ENCODE measurements at regions of chr3 and their contacts with region 1.

Region 1: DNA sequence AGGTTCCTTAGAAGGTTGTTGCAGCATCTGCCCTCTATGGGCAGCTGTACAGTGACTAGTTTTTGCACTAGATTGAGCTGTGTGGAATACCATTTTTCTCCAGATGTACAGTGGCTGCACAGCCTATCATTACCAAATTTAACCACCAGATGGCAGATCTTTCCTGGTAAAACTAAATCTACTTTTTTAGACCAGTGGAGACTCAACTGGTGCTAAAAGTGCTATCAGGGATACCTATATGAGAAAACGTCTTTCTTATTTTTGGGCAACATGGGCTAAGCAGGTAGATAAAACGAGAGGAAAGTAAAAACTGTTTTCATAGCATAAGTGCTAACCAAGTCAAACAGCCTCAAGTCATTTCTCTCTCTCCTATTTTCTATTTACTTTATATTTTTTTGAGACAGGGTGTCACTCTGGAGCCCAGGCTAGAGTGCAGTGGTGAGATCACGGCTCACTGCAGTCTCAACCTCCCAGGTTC is 21.2 kb downstream of the IGSF10 start:
- DNase-seq: no peak
- H3K4me3 ChIP-seq: no peak overlapping the region
- H3K27ac ChIP-seq: no peak overlapping the region
- H3K4me1 ChIP-seq: no peaks in the 10 kb centered on the region
- H3K27me3 ChIP-seq: no peaks in the 10 kb centered on the region
- CTCF ChIP-seq: peak; percentile 76 to 86 (median 81)
- EP300 ChIP-seq: no peak
- POLR2A ChIP-seq: no peak

Region 2: DNA sequence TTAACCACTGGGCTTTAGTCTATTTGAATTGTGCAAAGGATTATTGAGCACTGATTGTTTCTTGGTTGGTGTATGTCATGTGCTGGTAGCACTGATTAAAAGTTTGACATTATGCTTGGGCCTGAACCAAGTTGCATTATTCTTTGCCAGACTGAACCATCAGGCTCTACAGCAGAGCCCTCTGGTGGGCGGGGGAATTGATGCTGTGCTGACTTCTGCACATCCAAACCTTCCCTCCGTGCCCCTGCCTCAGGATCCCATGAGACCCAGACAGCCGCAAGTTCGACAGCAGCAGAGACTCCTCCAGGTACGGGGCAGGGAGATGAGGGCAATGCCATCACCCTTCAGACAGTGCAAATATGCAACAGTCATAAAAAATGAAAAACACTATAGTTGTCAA is 26.7 kb before region 1 on chr3:
- in situ Hi-C with region 1: no loop called
- intact Hi-C with region 1: no loop called
- DNase-seq: no peak
- H3K4me3 ChIP-seq: no peak overlapping the region
- H3K27ac ChIP-seq: no peak overlapping the region
- H3K4me1 ChIP-seq: no peaks in the 10 kb centered on the region
- H3K27me3 ChIP-seq: no peaks in the 10 kb centered on the region
- CTCF ChIP-seq: no peak
- EP300 ChIP-seq: no peak
- POLR2A ChIP-seq: no peak

Region 3: DNA sequence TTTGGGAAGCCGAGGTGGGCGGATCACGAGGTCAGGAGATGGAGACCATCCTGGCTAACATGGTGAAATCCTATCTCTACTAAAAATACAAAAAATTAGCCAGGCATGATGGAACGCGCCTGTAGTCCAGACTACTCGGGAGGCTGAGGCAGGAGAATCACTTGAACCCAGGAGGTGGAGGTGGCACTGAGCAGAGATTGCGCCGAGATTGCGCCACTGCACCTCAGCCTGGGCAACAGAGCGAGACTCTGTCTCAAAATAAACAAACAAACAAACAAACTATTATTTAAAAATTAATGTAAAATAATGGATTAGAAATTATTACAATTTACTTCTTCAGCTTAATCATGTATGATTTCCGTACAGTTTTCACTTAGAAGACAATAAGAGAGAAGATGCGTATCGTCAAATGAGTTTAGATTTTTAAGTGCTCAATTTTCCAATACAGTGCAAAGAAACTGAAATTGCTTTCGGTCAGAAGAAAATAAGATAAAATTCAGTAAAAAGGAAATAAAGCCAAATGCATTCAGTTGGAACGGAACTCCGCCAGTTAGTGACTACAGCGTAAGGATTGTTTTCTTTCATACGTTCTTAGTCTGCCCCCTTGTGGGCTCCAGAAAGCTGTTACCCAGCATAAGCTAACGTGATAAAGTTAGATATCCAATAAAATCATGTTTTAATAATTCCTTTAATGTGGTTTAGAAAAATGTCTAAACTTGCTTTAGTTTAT is 399.1 kb after region 1 on chr3:
- in situ Hi-C with region 1: loop called (anchors 5 to 10 kb)
- intact Hi-C with region 1: no loop called
- DNase-seq: peak; percentile 43
- H3K4me3 ChIP-seq: peak overlapping the region in 1 of 4 donors; percentile 17
- H3K27ac ChIP-seq: no peak overlapping the region
- H3K4me1 ChIP-seq: peaks cover 0 to 23% (median 4%) of the 10 kb centered on the region in 4 donors
- H3K27me3 ChIP-seq: no peaks in the 10 kb centered on the region
- CTCF ChIP-seq: peak; percentile 73 to 84 (median 81)
- EP300 ChIP-seq: no peak
- POLR2A ChIP-seq: no peak

Region 4: DNA sequence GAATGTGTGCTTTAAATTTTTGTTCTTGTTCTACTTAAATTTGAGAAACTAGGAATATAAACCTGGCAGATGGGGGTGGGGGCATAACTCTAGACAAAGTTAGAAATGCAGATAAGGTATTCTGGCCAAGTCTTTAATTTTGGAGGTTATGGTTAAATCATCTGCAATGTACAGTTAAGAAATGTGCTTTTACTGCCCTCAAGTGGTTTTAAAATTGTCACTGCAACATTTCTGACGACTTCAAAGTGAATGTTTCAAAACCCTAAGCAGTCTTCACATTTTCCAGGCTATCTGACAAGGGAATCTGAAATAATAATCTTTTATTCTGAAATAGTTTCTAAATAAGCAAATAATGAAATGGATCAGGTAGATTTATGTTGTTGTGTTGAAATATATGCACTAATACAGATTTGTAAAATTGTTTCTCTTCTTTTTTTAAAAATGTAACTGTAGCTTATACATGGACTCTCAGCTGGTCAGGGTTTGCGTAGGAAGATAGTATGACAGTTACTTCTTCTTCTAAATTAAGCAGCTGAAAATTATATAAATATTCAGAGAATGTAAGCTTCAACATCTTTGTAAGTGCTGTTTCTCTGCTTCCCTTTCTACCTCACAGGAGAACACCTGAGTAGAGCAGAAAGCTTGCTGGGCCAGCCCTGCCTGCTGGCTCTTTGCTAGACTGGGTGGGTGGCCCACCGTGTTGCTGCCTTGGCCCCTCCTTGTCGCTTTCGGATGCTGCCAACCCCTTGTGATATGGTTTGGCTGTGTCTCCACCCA is 478.8 kb after region 1 on chr3:
- in situ Hi-C with region 1: loop called in 3 of 4 experiments (anchors 10 kb)
- intact Hi-C with region 1: loop called (anchors 10 kb)
- DNase-seq: no peak
- H3K4me3 ChIP-seq: no peak overlapping the region
- H3K27ac ChIP-seq: no peak overlapping the region
- H3K4me1 ChIP-seq: peaks cover 0 to 7% (median 0%) of the 10 kb centered on the region in 4 donors
- H3K27me3 ChIP-seq: no peaks in the 10 kb centered on the region
- CTCF ChIP-seq: peak; percentile 52 to 60 (median 53)
- EP300 ChIP-seq: no peak
- POLR2A ChIP-seq: no peak